ENCODE measurements at regions of chr19 and their contacts with region 1.

Region 1: GRCh38 chr19:43519436-43520088 is 7.4 kb downstream of the ETHE1 start:
- DNase-seq: peak; percentile 70
- CTCF ChIP-seq: peak; percentile 84

Region 2: DNA sequence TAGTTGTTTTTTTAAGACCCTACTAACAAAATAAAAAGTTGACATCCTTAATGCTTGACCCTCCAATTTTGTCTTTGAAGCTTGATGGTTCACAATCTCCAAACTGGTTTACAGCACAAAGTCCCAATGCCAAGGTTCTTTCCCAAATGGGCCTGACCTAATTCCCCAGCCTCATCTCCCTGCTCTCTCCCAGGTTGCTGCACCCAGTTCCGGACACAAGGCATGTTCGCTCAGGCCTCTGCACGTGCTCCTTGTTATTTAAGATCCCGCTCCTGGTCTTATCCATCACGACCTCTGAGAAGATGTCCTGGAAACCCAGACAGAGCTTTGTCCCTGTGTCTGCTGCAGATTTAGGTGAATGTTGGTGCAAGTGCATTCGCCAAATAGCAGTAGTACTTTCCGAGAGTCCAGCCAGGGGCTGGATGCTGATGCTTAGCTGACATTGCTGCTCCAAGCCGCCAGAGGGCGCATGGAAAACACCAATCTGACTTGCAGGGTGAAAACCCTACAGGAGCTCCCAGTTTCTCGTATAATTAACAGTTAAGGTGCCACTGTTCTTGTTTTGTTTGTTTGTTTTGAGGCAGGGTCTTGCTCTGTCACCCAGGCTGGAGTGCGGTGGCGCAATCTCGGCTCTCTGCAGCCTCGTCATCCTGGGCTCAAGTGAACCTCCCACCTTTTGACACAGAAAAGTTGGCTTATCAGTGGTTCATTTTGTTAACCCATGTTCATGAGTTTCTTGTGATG is 72.6 kb before region 1 on chr19:
- in situ Hi-C with region 1: loop called (anchors 5 kb)
- DNase-seq: peak; percentile 81
- CTCF ChIP-seq: peak; percentile 96